SK-N-SH (cell line): ENCODE measurements at regions of chr9 and their contacts with region 1.

Region 1: GRCh38 chr9:6024020-6024554 is 8.7 kb upstream of the RANBP6 start:
- DNase-seq: peak; percentile 28
- H3K4me3 ChIP-seq: 0 out of 4 replicates have a peak overlapping the region, but pooled peaks have one; percentile 7 to 40
- H3K27ac ChIP-seq: no peak overlapping the region
- H3K4me1 ChIP-seq: no peaks in the 10 kb centered on the region; a peak in 1 of 4 replicates
- H3K27me3 ChIP-seq: no peaks in the 10 kb centered on the region; the same call in 1 of the 2 replicates
- CTCF ChIP-seq: peak; percentile 60
- EP300 ChIP-seq: no peak
- RAD21 ChIP-seq: no peak

Region 2: GRCh38 chr9:6008169-6008979 is 15.7 kb before region 1 on chr9:
- CTCF ChIA-PET with region 1: interaction called, 14 read pairs
- POLR2A ChIA-PET with region 1: no interaction called
- DNase-seq: peak; percentile 91
- H3K4me3 ChIP-seq: peak overlapping the region; percentile 89
- H3K27ac ChIP-seq: peak overlapping the region; percentile 85 to 90
- H3K4me1 ChIP-seq: peaks cover 9 to 10% of the 10 kb centered on the region in 2 experiments; a peak in 3 of 4 replicates
- H3K27me3 ChIP-seq: no peaks in the 10 kb centered on the region
- CTCF ChIP-seq: no peak
- EP300 ChIP-seq: no peak
- RAD21 ChIP-seq: no peak

Region 3: GRCh38 chr9:6034954-6035353 is 10.9 kb after region 1 on chr9:
- CTCF ChIA-PET with region 1: interaction called, 12 read pairs
- POLR2A ChIA-PET with region 1: no interaction called
- DNase-seq: no peak
- H3K4me3 ChIP-seq: no peak overlapping the region
- H3K27ac ChIP-seq: no peak overlapping the region
- H3K4me1 ChIP-seq: no peaks in the 10 kb centered on the region; a peak in 1 of 4 replicates
- H3K27me3 ChIP-seq: peaks cover 8% of the 10 kb centered on the region; the same call in 1 of the 2 replicates
- CTCF ChIP-seq: no peak
- EP300 ChIP-seq: no peak
- RAD21 ChIP-seq: no peak

Region 4: GRCh38 chr9:6328103-6328502 is 304.0 kb after region 1 on chr9 and contains the start of gene TPD52L3:
- CTCF ChIA-PET with region 1: no interaction called
- POLR2A ChIA-PET with region 1: no interaction called
- DNase-seq: no peak
- H3K4me3 ChIP-seq: no peak within 1 kb of the TSS
- H3K27ac ChIP-seq: no peak within 1 kb of the TSS
- H3K4me1 ChIP-seq: no peaks in the 10 kb centered on the region
- H3K27me3 ChIP-seq: no peaks in the 10 kb centered on the region
- CTCF ChIP-seq: no peak
- EP300 ChIP-seq: no peak
- RAD21 ChIP-seq: no peak
- polyA plus RNA-seq, gene TPD52L3: not detected in 2 replicates